ENCODE measurements at regions of chr3 and their contacts with region 1.

Region 1: DNA sequence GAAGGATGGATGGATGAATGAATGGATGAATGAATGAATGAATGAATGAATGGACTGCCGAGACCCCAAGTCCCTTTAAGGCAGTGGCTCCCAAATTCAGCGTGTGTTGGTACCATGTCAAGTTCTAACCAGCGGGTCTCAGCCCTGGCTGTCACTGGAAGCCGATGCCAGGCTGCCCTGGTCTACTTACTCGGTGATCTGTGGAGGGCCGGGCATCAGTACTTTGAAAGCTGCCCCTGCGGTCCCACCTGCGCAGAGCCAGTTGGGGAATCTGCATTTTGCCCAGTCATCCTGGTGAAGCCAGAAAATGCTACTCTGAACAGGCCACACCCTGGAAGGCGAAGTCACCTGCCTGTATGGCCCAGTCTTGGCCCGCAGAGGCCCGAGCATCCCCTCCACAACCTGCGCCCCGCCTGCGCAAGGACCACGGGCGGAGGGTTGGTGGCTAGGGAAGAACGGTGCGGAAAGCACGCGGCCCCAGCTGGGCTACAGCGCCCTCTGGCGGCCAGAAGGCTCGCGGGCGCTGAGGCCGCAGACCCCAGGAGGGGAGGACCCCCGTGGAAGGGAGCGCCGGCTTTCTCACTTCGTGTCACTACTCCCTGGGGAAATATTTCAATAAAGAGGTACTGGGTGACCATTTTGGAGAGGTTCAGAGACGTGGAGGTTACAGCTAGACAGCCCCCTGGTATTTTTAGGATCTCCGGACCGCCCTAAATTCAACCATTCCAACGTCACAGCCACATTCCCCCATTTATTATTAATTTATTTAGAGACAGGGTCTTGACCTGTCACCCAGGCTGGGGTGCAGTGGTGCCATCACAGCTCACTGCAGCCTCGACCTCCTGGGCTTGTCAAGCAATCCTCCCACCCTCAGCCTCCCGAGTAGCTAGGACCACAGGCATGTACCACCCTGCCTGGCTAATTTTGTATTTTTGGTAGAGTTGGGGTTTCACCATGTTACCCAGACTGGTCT is 34.9 kb downstream of the PRKCD start:
- DNase-seq: peak in 30 of 42 donors; percentile 16 to 79 (median 52)

Region 2: GRCh38 chr3:53114011-53114400 is 81.9 kb before region 1 on chr3:
- intact Hi-C with region 1: loop called (anchors 5 kb)
- DNase-seq: peak; percentile 60 to 95 (median 86)

Region 3: DNA sequence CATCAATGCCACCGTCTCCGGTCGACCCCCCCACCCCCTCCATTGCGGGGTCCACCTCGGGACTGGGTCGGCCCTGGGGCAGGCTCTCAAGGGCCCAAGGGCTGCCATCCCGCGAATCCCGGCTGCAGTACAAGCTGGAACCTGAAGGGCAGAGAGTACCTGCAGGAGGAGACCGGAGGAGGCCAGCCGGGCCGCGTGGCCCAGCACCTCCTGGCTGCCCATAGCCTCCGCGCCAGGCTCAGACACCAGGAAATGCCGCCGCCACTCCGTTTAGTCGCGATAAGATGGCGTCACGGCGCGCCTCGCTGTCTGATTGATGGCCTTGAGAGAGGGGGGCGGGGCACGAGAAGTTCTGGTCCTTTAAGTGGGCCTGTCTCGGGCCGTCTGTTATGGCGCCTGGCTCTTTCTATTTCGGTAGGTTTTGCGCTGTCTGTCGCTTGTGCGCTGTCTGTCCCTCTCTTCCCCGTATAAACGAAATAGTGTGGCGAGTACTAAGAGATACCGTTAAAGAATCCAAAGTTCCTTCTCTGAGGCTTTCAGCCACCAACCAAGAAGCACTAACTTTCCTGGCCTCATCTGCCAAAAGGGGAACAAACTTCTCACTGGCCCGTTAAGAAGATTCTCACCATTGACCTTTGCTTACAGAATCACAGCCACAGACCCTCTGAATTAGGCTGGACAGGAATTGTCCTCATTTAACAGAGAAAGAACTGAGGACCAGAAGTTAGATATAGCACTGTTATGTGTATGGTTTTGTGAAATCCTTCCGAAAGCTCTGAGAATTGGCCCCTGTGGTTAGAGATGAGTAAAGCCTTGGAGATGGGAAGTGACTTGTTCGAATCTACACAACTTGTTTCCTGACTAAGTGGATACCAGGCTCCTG is 65.5 kb before region 1 on chr3 and contains the start of gene RFT1:
- intact Hi-C with region 1: loop called (anchors 5 kb)
- DNase-seq: peak; percentile 93 to 99 (median 97)